ENCODE measurements at regions of chr12 and their contacts with region 1.

Region 1: DNA sequence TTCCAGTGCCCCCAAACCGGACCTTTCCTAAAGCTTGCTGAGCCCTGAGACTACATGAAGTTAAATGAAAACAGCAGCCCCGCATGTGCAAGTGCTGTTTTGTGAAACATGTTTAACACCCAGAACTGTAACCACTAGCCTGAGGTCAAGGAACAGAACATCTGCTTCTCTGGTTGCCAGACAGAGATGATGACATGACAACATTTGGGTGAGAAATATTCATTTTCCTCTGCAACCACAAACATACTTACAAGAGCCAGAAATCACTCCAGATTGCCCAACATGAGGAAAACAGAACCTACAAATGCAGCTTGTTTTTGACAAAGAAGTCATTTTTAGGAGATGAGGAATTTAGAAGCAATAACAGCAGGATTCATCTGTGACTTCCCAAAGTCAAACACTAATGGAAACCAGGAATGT is 110.4 kb downstream of the BCAT1 start:
- DNase-seq: no peak
- ATAC-seq: no peak
- H3K4me3 Mint-ChIP-seq: no peak overlapping the region
- H3K27ac Mint-ChIP-seq: peak overlapping the region; percentile 24
- H3K4me1 Mint-ChIP-seq: peaks cover 23% of the 10 kb centered on the region
- H3K27me3 Mint-ChIP-seq: no peaks in the 10 kb centered on the region
- CTCF ChIP-seq: no peak

Region 2: DNA sequence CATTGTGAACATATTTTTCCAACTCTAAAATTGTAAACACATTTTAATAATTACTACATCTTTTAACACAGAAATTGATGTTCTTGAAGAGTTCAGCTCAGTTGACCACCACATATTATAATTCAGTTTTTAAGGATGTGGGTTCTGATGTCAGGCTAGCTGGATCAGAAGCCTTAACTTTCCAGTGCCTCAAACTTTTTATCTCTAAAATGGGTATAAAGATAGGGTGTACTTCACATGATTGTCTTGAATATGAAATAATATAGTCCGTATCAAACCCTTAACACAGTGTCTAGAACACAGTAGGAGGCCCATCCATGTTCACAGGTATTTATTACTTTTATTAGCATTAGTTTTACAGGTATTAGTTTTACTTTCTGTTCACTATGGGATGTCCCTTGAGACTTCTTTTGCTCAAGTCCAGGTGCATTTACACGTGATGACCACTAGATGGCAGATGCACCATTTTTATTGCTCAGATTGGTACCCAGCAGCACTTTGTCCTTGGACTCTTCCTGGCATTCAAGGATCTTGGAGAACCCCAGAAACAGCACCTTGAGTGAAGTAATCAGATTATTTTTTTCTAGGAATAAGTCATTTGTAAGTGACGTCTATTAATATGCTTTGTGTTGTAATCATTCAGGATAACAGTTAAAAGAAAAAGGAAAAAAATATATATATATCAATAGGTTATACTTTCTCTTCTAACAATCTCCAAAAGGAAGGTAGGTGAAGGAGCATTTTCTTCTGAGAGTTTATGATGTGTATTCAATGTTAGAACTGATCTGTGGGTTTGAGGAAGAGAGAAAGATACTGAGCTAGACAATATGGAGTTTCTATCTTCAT is 1633.4 kb before region 1 on chr12:
- CTCF ChIA-PET with region 1: interaction called, 10 read pairs
- POLR2A ChIA-PET with region 1: no interaction called
- intact Hi-C with region 1: loop called (anchors 1 kb)
- DNase-seq: no peak
- ATAC-seq: peak; percentile 92
- H3K4me3 Mint-ChIP-seq: no peak overlapping the region
- H3K27ac Mint-ChIP-seq: no peak overlapping the region
- H3K4me1 Mint-ChIP-seq: no peaks in the 10 kb centered on the region
- H3K27me3 Mint-ChIP-seq: peaks cover 5% of the 10 kb centered on the region
- CTCF ChIP-seq: peak; percentile 68

Region 3: DNA sequence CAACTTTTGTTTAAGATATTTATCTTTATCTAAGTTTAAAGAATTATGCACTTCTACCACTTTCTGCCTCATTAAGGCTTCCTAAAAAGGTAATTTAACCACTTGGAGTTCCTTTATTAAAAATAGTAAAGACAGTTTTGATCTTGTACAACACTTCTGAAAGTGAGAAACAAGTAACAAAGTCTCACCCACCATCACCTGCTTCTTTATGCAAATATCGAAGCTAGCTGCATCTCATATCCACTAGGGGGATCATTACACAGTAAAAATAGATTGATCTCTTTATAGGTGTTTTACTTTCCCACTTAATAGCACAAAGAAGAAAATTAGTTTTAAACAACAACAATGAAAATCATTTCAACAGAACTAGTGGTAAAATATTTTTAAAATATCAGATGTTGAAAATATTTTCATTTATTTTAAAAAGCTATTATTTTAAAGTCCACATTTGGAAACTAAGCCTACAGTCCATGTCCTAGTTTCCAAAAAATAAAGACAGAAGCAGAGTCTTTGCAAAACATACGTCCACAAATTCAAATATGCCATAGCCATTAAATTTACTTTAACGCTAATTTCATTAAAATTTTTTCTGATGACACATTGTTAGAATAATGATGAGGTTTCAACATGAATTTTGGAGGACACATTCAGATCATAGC is 729.0 kb before region 1 on chr12:
- CTCF ChIA-PET with region 1: no interaction called
- POLR2A ChIA-PET with region 1: no interaction called
- intact Hi-C with region 1: loop called (anchors 1 kb)
- DNase-seq: no peak
- ATAC-seq: peak; percentile 64
- H3K4me3 Mint-ChIP-seq: no peak overlapping the region
- H3K27ac Mint-ChIP-seq: no peak overlapping the region
- H3K4me1 Mint-ChIP-seq: peaks cover 5% of the 10 kb centered on the region
- H3K27me3 Mint-ChIP-seq: no peaks in the 10 kb centered on the region
- CTCF ChIP-seq: peak; percentile 36

Region 4: DNA sequence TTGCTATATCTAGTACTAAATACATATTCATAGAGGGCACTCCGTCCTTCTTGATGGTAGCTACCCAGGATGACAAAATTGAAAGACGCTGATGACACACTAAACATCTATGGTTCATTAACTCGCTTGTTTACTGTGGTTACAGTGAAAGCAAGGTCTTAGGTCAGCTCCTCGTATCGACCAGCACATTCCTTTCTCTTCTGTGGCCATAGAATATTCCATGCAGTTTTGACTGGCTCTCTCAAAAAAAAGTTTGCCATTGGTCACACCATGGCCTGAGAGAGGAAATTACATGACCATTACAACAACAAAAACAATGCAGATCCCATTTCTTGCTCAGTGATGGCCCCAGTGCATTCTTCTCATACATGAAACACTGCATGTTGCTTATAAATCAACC is 477.6 kb before region 1 on chr12:
- CTCF ChIA-PET with region 1: interaction called, 7 read pairs
- POLR2A ChIA-PET with region 1: no interaction called
- intact Hi-C with region 1: loop called (anchors 1 kb)
- DNase-seq: no peak
- ATAC-seq: peak; percentile 53
- H3K4me3 Mint-ChIP-seq: peak overlapping the region; percentile 69
- H3K27ac Mint-ChIP-seq: peak overlapping the region; percentile 76
- H3K4me1 Mint-ChIP-seq: peaks cover 65% of the 10 kb centered on the region
- H3K27me3 Mint-ChIP-seq: no peaks in the 10 kb centered on the region
- CTCF ChIP-seq: no peak

Region 5: GRCh38 chr12:24596768-24597388 is 241.7 kb before region 1 on chr12:
- CTCF ChIA-PET with region 1: no interaction called
- POLR2A ChIA-PET with region 1: no interaction called
- intact Hi-C with region 1: loop called (anchors 1 kb)
- DNase-seq: no peak
- ATAC-seq: no peak
- H3K4me3 Mint-ChIP-seq: no peak overlapping the region
- H3K27ac Mint-ChIP-seq: no peak overlapping the region
- H3K4me1 Mint-ChIP-seq: peaks cover 42% of the 10 kb centered on the region
- H3K27me3 Mint-ChIP-seq: no peaks in the 10 kb centered on the region
- CTCF ChIP-seq: no peak

Region 6: GRCh38 chr12:24814379-24815113 is 24.0 kb before region 1 on chr12:
- CTCF ChIA-PET with region 1: no interaction called
- POLR2A ChIA-PET with region 1: interaction called, 10 read pairs
- intact Hi-C with region 1: loop called (anchors 1 kb)
- DNase-seq: no peak
- ATAC-seq: peak; percentile 85
- H3K4me3 Mint-ChIP-seq: peak overlapping the region; percentile 77
- H3K27ac Mint-ChIP-seq: peak overlapping the region; percentile 80
- H3K4me1 Mint-ChIP-seq: peaks cover 34% of the 10 kb centered on the region
- H3K27me3 Mint-ChIP-seq: no peaks in the 10 kb centered on the region
- CTCF ChIP-seq: no peak